H1 (cell line): ENCODE measurements at regions of chr1 and their contacts with region 1.

Region 1: DNA sequence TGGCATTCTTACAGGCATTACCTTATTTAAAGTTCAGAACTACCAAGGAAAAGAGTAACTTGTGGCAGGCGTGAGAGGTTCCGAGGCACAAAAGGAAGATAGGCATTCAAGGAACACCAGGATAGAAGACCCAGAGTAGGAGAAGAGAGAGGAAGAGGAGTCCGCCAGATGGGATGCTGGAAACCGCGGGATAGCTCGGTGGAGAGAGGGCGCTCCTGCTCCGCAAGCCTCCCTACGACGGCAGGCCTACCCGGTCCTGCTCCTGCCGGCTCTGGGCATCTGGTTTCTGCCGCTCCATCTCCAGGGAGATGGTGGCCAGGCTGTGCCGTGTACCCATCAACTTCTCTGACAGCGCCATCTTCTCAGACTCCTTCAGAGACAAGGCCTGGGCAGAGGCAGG is 5.4 kb upstream of the NBPF1 start:
- DNase-seq: peak; percentile 64 to 93
- H3K4me3 ChIP-seq: no peak overlapping the region
- H3K27ac ChIP-seq: no peak overlapping the region
- H3K4me1 ChIP-seq: peaks cover 0 to 3% (median under 1%) of the 10 kb centered on the region in 4 experiments; a peak in 3 of 7 replicates
- H3K27me3 ChIP-seq: peaks cover 6 to 17% (median 14%) of the 10 kb centered on the region in 4 experiments
- CTCF ChIP-seq: peak in 2 of 3 experiments; percentile 44 to 59; a peak in 3 of 4 replicates
- EP300 ChIP-seq: no peak
- POLR2A ChIP-seq: no peak
- RAD21 ChIP-seq: peak; percentile 47 to 54

Region 2: DNA sequence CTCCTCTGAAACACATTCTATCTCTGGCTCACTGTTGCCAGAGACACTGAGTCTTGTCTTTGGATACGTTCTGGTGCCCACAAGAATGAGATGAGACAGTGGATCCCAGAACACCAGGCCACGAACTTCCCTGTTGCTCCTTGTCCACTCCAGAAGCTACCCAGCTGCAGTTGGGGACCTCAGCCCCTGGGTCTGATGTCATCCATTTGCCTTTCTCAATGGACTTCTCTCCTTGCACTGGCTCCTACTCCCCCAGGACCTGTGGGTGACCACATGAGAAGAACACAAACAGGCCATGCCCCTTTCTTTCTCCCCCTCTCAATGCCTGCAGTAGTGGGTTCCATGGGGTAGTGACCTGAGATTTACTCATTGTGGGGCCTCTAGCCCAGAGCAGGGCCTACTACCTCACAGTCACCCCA is 11.3 kb before region 1 on chr1:
- CTCF ChIA-PET with region 1: interaction called, 197 read pairs
- POLR2A ChIA-PET with region 1: interaction called, 12 read pairs
- DNase-seq: no peak
- H3K4me3 ChIP-seq: no peak overlapping the region
- H3K27ac ChIP-seq: no peak overlapping the region
- H3K4me1 ChIP-seq: peaks cover 0 to 4% (median 1%) of the 10 kb centered on the region in 4 experiments; a peak in 1 of 7 replicates
- H3K27me3 ChIP-seq: peaks cover 3 to 15% (median 9%) of the 10 kb centered on the region in 4 experiments
- CTCF ChIP-seq: no peak
- EP300 ChIP-seq: no peak
- POLR2A ChIP-seq: no peak
- RAD21 ChIP-seq: no peak

Region 3: GRCh38 chr1:16631248-16632043 is 12.7 kb after region 1 on chr1:
- CTCF ChIA-PET with region 1: interaction called, 239 read pairs
- POLR2A ChIA-PET with region 1: interaction called, 6 read pairs
- DNase-seq: peak in 1 of 2 experiments; percentile 56
- H3K4me3 ChIP-seq: no peak overlapping the region
- H3K27ac ChIP-seq: no peak overlapping the region
- H3K4me1 ChIP-seq: peaks cover 0 to 2% (median 0%) of the 10 kb centered on the region in 4 experiments; a peak in 2 of 7 replicates
- H3K27me3 ChIP-seq: no peaks in the 10 kb centered on the region
- CTCF ChIP-seq: no peak
- EP300 ChIP-seq: no peak
- POLR2A ChIP-seq: no peak
- RAD21 ChIP-seq: no peak

Region 4: GRCh38 chr1:16904560-16905111 is 285.9 kb after region 1 on chr1:
- CTCF ChIA-PET with region 1: interaction called, 3 read pairs
- POLR2A ChIA-PET with region 1: interaction called, 11 read pairs
- DNase-seq: peak; percentile 85 to 94
- H3K4me3 ChIP-seq: peak overlapping the region; percentile 43 to 65 (median 48)
- H3K27ac ChIP-seq: peak overlapping the region; percentile 100
- H3K4me1 ChIP-seq: peaks cover 0 to 3% (median 0%) of the 10 kb centered on the region in 4 experiments; a peak in 3 of 7 replicates
- H3K27me3 ChIP-seq: no peaks in the 10 kb centered on the region
- CTCF ChIP-seq: no peak
- EP300 ChIP-seq: no peak
- POLR2A ChIP-seq: no peak
- RAD21 ChIP-seq: no peak

Region 5: GRCh38 chr1:16960560-16961296 is 342.0 kb after region 1 on chr1:
- CTCF ChIA-PET with region 1: interaction called, 12 read pairs
- POLR2A ChIA-PET with region 1: no interaction called
- DNase-seq: peak; percentile 84 to 97
- H3K4me3 ChIP-seq: peak overlapping the region; percentile 5 to 46 (median 23); a peak in 7 of 8 replicates
- H3K27ac ChIP-seq: no peak overlapping the region
- H3K4me1 ChIP-seq: no peaks in the 10 kb centered on the region
- H3K27me3 ChIP-seq: no peaks in the 10 kb centered on the region
- CTCF ChIP-seq: peak; percentile 80 to 87 (median 84)
- EP300 ChIP-seq: 0 out of 3 replicates have a peak, but pooled peaks of 1 of the 2 experiments have one; percentile 25
- POLR2A ChIP-seq: peak in 1 of 2 experiments; percentile 66; a peak in 2 of 3 replicates
- RAD21 ChIP-seq: peak; percentile 47 to 53